B cell (primary cell): ENCODE measurements at regions of chrX and their contacts with region 1.

Region 1: GRCh38 chrX:9988762-9989161 is 21.6 kb downstream of the CLDN34 start:
- DNase-seq: peak; percentile 34
- ATAC-seq: no peak
- H3K4me3 ChIP-seq: no peak overlapping the region
- H3K4me3 Mint-ChIP-seq: no peak overlapping the region
- H3K27ac ChIP-seq: no peak overlapping the region
- H3K27ac Mint-ChIP-seq: no peak overlapping the region
- H3K4me1 ChIP-seq: peaks cover 4 to 11% of the 10 kb centered on the region in 2 donors
- H3K4me1 Mint-ChIP-seq: peaks cover 17% of the 10 kb centered on the region
- H3K27me3 ChIP-seq: no peaks in the 10 kb centered on the region
- H3K27me3 Mint-ChIP-seq: no peaks in the 10 kb centered on the region
- CTCF ChIP-seq: peak; percentile 46

Region 2: GRCh38 chrX:8743126-8743732 is 1245.5 kb before region 1 on chrX:
- CTCF ChIA-PET with region 1: interaction called, 3 read pairs
- POLR2A ChIA-PET with region 1: no interaction called
- intact Hi-C with region 1: loop called (anchors 10 kb)
- DNase-seq: peak; percentile 56
- ATAC-seq: no peak
- H3K4me3 ChIP-seq: no peak overlapping the region
- H3K4me3 Mint-ChIP-seq: no peak overlapping the region
- H3K27ac ChIP-seq: no peak overlapping the region
- H3K27ac Mint-ChIP-seq: no peak overlapping the region
- H3K4me1 ChIP-seq: no peaks in the 10 kb centered on the region
- H3K4me1 Mint-ChIP-seq: no peaks in the 10 kb centered on the region
- H3K27me3 ChIP-seq: peaks cover 0 to 2% (median 0%) of the 10 kb centered on the region in 4 experiments
- H3K27me3 Mint-ChIP-seq: peaks cover 3% of the 10 kb centered on the region
- CTCF ChIP-seq: peak; percentile 66

Region 3: GRCh38 chrX:9885150-9885549 is 103.6 kb before region 1 on chrX:
- CTCF ChIA-PET with region 1: no interaction called
- POLR2A ChIA-PET with region 1: interaction called, 6 read pairs
- intact Hi-C with region 1: loop called (anchors 2 kb)
- DNase-seq: peak; percentile 67
- ATAC-seq: peak; percentile 72
- H3K4me3 ChIP-seq: no peak overlapping the region
- H3K4me3 Mint-ChIP-seq: no peak overlapping the region
- H3K27ac ChIP-seq: no peak overlapping the region
- H3K27ac Mint-ChIP-seq: no peak overlapping the region
- H3K4me1 ChIP-seq: peaks cover 0 to 4% of the 10 kb centered on the region in 2 donors
- H3K4me1 Mint-ChIP-seq: peaks cover 2% of the 10 kb centered on the region
- H3K27me3 ChIP-seq: no peaks in the 10 kb centered on the region
- H3K27me3 Mint-ChIP-seq: no peaks in the 10 kb centered on the region
- CTCF ChIP-seq: peak; percentile 56

Region 4: DNA sequence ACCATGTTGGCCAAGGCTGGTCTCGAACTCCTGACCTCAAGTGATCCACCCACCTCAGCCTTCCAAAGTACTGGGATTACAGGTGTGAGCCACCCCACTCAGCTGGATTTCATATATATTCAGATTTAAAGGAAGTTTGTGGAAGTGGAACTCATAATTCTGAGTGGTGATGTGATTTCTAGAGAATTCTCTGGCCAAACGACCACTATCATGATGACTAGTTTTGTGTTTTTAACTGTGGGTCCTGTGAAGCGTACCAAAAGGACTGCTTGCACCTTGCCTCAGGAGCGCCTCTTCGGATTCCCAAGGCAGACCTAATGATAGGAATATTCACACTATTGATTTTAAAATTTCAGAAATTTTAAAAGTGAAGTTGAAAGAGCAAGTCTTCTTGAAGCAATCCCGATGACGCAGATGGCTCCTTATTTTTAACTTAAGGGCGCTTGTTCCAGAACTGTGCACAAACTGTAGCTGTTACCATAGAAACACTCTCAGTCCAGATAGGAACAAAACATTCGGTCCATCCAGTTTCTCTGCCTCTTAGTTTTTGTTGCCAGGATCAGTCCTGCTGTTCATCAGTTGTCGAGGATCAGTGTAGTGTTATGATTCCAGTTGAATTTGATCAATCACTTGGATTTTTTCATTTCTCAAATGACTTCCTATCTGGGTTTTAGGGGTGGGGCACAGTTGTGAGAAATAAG is 116.3 kb after region 1 on chrX:
- CTCF ChIA-PET with region 1: no interaction called
- POLR2A ChIA-PET with region 1: interaction called, 10 read pairs
- intact Hi-C with region 1: no loop called
- DNase-seq: peak; percentile 15
- ATAC-seq: no peak
- H3K4me3 ChIP-seq: no peak overlapping the region
- H3K4me3 Mint-ChIP-seq: peak overlapping the region; percentile 26
- H3K27ac ChIP-seq: peak overlapping the region; percentile 40 to 81
- H3K27ac Mint-ChIP-seq: peak overlapping the region; percentile 84
- H3K4me1 ChIP-seq: peaks cover 59 to 87% of the 10 kb centered on the region in 2 donors
- H3K4me1 Mint-ChIP-seq: peaks cover 78% of the 10 kb centered on the region
- H3K27me3 ChIP-seq: no peaks in the 10 kb centered on the region
- H3K27me3 Mint-ChIP-seq: no peaks in the 10 kb centered on the region
- CTCF ChIP-seq: no peak

Region 5: GRCh38 chrX:10130354-10130753 is 141.6 kb after region 1 on chrX:
- CTCF ChIA-PET with region 1: no interaction called
- POLR2A ChIA-PET with region 1: no interaction called
- intact Hi-C with region 1: no loop called
- DNase-seq: no peak
- ATAC-seq: no peak
- H3K4me3 ChIP-seq: no peak overlapping the region
- H3K4me3 Mint-ChIP-seq: no peak overlapping the region
- H3K27ac ChIP-seq: no peak overlapping the region
- H3K27ac Mint-ChIP-seq: no peak overlapping the region
- H3K4me1 ChIP-seq: no peaks in the 10 kb centered on the region
- H3K4me1 Mint-ChIP-seq: peaks cover 7% of the 10 kb centered on the region
- H3K27me3 ChIP-seq: no peaks in the 10 kb centered on the region
- H3K27me3 Mint-ChIP-seq: no peaks in the 10 kb centered on the region
- CTCF ChIP-seq: no peak